PC-9 (cell line): ENCODE measurements at regions of chr14 and their contacts with region 1.

Region 1: DNA sequence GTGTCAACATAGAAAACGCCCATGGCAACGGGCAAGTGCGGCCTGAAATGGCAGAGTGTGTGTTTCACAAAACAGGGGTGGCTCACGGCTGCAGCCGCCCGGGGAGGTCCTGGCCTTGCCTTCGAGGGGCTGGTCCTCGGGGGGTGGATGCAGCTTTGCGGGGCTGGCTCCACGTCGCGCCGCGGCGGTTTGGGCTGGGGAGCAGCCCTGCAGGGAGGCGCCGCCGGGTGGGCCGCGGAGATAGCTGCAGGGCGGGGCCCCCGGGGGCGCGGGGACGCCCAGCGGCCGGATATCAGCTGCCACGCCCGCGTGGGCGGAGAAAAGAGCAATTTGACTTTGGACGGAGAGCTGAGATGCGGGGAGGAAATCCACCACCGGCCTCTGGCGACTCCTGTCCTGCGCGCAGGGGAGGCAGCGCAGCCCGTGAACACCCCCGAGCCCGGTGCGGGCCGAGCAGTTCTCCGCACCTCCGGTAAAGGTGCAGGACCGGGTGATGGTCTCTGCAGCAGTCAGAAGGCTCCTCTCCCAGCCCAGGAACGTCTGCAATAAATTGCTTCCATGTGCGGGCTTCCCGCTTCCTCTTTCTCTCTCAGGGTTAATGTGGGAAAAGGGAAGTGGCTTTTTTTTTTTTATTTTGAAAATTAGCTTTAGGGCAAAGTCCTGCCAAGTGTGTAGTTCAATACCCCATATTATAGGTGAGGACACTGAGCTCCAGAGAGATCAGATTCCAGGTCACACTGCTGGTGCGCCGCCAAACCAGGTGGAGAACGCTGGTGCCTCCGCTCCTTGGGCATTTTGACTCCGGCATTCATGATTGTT is 110.5 kb downstream of the ARF6 start:
- DNase-seq: peak; percentile 78 to 80
- H3K4me3 ChIP-seq: peak overlapping the region; percentile 63
- H3K27ac ChIP-seq: peak overlapping the region; percentile 95
- H3K4me1 ChIP-seq: peaks cover 88% of the 10 kb centered on the region
- H3K27me3 ChIP-seq: no peaks in the 10 kb centered on the region
- CTCF ChIP-seq: no peak

Region 2: GRCh38 chr14:49828640-49829039 is 174.8 kb before region 1 on chr14:
- CTCF ChIA-PET with region 1: interaction called, 12 read pairs
- POLR2A ChIA-PET with region 1: no interaction called
- intact Hi-C with region 1: no loop called
- DNase-seq: no peak
- H3K4me3 ChIP-seq: no peak overlapping the region
- H3K27ac ChIP-seq: no peak overlapping the region
- H3K4me1 ChIP-seq: no peaks in the 10 kb centered on the region
- H3K27me3 ChIP-seq: no peaks in the 10 kb centered on the region
- CTCF ChIP-seq: no peak

Region 3: GRCh38 chr14:49892636-49893308 is 110.7 kb before region 1 on chr14 and contains the start of gene ARF6:
- CTCF ChIA-PET with region 1: interaction called, 3 read pairs
- POLR2A ChIA-PET with region 1: interaction called, 3 read pairs
- intact Hi-C with region 1: loop called (anchors 1 kb)
- DNase-seq: peak; percentile 87 to 97
- H3K4me3 ChIP-seq: peak within 1 kb of the TSS; percentile 99
- H3K27ac ChIP-seq: peak within 1 kb of the TSS; percentile 96
- H3K4me1 ChIP-seq: peaks cover 28% of the 10 kb centered on the region
- H3K27me3 ChIP-seq: no peaks in the 10 kb centered on the region
- CTCF ChIP-seq: no peak; the same call in 1 of the 2 replicates
- total RNA-seq, gene ARF6: 46.8 and 65.3 TPM in 2 replicates

Region 4: DNA sequence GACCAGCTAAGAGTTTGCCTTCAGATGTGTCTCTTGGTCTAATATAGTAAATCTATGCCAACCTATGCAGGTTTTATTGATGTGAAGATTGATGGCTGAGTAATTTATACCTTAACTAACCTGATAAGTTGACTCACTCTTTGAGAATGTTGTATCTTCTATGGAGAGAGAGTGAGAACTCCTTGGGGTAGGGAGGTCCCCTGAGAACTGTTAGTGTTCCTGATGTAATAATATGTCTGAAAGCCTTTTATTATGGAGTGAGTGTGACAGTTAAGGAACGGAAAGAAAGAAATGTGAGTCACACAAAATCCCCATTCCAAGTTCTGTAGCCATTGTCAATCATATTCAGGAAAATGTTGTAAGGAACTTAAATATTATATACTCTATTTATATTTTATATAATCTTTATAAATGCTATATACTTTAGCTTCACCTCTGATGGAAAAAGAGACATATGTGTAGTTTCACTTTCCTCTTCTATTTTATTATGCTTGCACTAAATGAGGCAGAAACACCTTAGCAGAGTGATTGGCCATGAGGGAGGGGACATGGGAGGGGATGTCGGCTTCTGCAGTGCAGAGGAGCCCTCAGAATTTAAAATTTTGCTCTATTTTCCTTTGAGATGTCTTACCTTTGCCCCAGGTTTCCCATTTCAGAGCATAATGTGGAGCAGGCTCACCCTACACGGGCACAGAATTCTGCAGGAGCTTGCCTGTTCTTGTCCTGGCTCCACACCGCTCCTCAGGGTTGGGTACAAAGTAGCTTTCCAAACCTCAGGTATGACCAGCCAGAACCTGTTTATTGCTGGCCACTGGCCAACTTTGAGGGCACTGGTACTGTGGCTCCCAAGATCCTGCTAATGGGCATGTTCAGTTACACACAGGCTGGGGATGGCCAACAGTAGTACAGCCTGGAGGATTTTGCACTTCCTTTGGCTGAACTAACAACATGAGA is 52.9 kb before region 1 on chr14:
- CTCF ChIA-PET with region 1: no interaction called
- POLR2A ChIA-PET with region 1: interaction called, 6 read pairs
- intact Hi-C with region 1: loop called (anchors 2 kb)
- DNase-seq: peak; percentile 76 to 93
- H3K4me3 ChIP-seq: no peak overlapping the region
- H3K27ac ChIP-seq: peak overlapping the region; percentile 83
- H3K4me1 ChIP-seq: peaks cover 83% of the 10 kb centered on the region
- H3K27me3 ChIP-seq: no peaks in the 10 kb centered on the region
- CTCF ChIP-seq: no peak

Region 5: GRCh38 chr14:50038398-50039119 is 35.1 kb after region 1 on chr14:
- CTCF ChIA-PET with region 1: interaction called, 4 read pairs
- POLR2A ChIA-PET with region 1: interaction called, 35 read pairs
- intact Hi-C with region 1: loop called (anchors 1 kb)
- DNase-seq: peak in 1 of 2 experiments; percentile 79
- H3K4me3 ChIP-seq: no peak overlapping the region
- H3K27ac ChIP-seq: peak overlapping the region; percentile 98
- H3K4me1 ChIP-seq: peaks cover 78% of the 10 kb centered on the region
- H3K27me3 ChIP-seq: no peaks in the 10 kb centered on the region
- CTCF ChIP-seq: no peak; the same call in 1 of the 2 replicates

Region 6: DNA sequence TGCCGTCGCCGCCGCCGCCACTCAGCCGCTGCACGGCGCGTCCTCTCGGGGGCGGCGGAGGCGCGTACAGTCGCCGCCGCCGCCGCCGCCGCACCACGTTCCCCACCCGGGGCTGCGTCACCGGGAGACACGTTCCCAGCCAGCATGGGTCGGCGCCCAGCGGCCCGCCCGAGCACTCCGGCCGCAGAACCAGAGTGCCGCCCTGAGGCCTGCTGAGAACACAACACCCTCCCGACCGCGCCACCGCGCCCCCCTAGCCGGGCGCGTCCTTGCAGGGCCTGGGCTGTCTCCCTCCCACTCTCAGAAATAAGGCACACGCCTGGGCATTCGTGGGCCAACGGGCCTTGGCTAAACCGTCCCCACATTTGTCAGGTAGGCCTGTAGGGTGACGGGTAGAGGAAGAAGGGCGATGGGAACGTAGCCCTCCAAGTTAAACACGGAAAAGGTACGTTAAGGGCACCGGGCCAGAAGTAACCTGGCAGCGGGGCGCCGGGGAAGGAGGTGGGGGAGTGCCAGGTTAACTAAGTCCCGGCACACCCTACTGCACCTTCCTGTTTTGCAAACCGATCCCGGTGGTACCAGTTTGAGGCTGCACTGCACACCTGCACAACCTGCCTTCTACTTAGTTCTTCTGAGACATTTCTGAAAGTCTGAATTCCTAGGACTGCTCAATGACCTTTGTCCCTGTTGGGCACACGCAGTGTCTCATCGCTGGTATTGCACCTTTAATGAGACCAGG is 529.2 kb after region 1 on chr14 and contains the start of gene MAP4K5:
- CTCF ChIA-PET with region 1: no interaction called
- POLR2A ChIA-PET with region 1: no interaction called
- intact Hi-C with region 1: loop called (anchors 5 kb)
- DNase-seq: peak; percentile 88 to 92
- H3K4me3 ChIP-seq: peak within 1 kb of the TSS; percentile 92
- H3K27ac ChIP-seq: peak within 1 kb of the TSS; percentile 64
- H3K4me1 ChIP-seq: peaks cover 47% of the 10 kb centered on the region
- H3K27me3 ChIP-seq: no peaks in the 10 kb centered on the region
- CTCF ChIP-seq: peak; percentile 84
- total RNA-seq, gene MAP4K5: 51.8 and 66.6 TPM in 2 replicates

Region 7: DNA sequence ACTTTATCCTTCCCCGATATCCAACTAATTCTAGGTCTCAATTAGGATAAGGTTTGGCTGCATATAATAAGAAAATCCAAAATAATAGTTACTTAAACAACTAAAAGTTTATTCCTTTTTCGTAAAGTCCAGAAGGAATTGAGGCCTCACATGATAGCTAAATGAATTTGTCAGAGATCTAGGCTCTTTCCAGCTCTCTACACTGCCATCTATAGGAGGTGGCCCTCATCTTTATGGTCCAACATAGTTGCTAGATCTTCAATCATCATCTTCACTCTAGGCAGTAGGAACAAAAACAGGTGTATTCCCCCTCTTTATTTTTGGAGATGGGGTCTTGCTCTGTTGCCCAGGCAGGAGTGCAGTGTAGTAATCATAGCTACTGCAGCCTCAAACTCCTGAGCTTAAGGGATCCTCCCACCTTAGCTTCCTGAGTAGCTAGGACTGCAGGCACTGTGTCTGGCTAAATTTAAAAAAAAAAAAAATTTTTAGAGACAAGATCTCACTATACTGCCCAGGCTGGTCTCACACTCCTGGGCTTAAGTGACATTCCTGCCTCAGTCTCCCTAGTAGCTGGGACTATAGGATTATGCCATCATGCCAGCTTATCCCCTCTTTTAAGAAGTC is 711.1 kb after region 1 on chr14:
- CTCF ChIA-PET with region 1: no interaction called
- POLR2A ChIA-PET with region 1: no interaction called
- intact Hi-C with region 1: no loop called
- DNase-seq: no peak
- H3K4me3 ChIP-seq: no peak overlapping the region
- H3K27ac ChIP-seq: no peak overlapping the region
- H3K4me1 ChIP-seq: no peaks in the 10 kb centered on the region
- H3K27me3 ChIP-seq: no peaks in the 10 kb centered on the region
- CTCF ChIP-seq: peak; percentile 35